ENCODE measurements at regions of chr7 and their contacts with region 1.

Region 1: GRCh38 chr7:69476416-69476815 is 121.9 kb upstream of the AUTS2 start:
- DNase-seq: no peak
- ATAC-seq: no peak
- H3K4me3 ChIP-seq: no peak overlapping the region
- H3K4me3 Mint-ChIP-seq: no peak overlapping the region
- H3K27ac ChIP-seq: no peak overlapping the region
- H3K27ac Mint-ChIP-seq: no peak overlapping the region
- H3K4me1 ChIP-seq: no peaks in the 10 kb centered on the region
- H3K4me1 Mint-ChIP-seq: no peaks in the 10 kb centered on the region
- H3K27me3 ChIP-seq: peaks cover 0 to 7% of the 10 kb centered on the region in 2 experiments
- H3K27me3 Mint-ChIP-seq: peaks cover 0 to 3% of the 10 kb centered on the region in 2 donors

Region 2: GRCh38 chr7:69217516-69218350 is 258.7 kb before region 1 on chr7:
- CTCF ChIA-PET with region 1: no interaction called
- POLR2A ChIA-PET with region 1: interaction called in 1 of 2 experiments, 11 read pairs
- DNase-seq: no peak
- ATAC-seq: no peak
- H3K4me3 ChIP-seq: no peak overlapping the region
- H3K4me3 Mint-ChIP-seq: no peak overlapping the region
- H3K27ac ChIP-seq: no peak overlapping the region
- H3K27ac Mint-ChIP-seq: no peak overlapping the region
- H3K4me1 ChIP-seq: no peaks in the 10 kb centered on the region
- H3K4me1 Mint-ChIP-seq: no peaks in the 10 kb centered on the region
- H3K27me3 ChIP-seq: no peaks in the 10 kb centered on the region
- H3K27me3 Mint-ChIP-seq: no peaks in the 10 kb centered on the region

Region 3: DNA sequence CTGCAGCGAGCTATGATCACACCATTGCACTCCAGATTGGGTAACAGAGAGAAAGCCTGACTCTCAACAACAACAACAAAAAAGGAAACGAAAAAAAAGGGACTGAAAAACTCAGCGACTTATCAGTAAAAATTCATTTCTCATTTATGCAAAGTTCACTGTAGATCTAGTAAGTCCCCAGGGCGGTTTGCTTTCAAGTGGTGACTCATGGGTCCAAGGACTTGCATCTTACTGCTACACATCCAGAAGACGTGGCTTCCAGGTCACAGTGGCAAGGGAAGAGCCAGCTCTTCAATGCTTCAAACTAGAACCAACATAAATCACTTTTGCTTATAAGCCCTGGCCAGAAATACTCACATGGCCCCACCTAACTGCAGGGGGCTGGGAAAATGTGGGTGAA is 56.5 kb before region 1 on chr7:
- CTCF ChIA-PET with region 1: no interaction called
- POLR2A ChIA-PET with region 1: no interaction called
- DNase-seq: no peak
- ATAC-seq: no peak
- H3K4me3 ChIP-seq: no peak overlapping the region
- H3K4me3 Mint-ChIP-seq: no peak overlapping the region
- H3K27ac ChIP-seq: no peak overlapping the region
- H3K27ac Mint-ChIP-seq: no peak overlapping the region
- H3K4me1 ChIP-seq: no peaks in the 10 kb centered on the region
- H3K4me1 Mint-ChIP-seq: no peaks in the 10 kb centered on the region
- H3K27me3 ChIP-seq: no peaks in the 10 kb centered on the region
- H3K27me3 Mint-ChIP-seq: no peaks in the 10 kb centered on the region

Region 4: DNA sequence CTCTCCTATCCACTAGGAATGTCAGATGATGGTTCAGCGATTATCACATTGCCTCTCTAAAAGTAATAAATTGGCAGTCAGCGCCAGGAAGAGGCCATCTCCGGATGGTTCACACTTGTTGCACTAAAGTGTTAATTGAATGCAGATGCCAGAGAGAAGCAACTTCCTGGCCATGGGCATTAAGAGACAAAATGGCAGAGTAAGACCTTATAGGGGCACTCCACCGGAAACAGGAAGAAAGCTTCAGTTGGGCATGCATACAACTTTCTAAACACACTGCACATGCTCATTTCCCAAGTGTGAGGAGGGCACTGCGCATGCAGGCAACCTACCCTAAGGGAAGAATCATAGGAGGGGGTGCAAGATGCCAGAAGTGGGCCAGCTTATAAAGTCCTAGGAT is 50.2 kb after region 1 on chr7:
- CTCF ChIA-PET with region 1: no interaction called
- POLR2A ChIA-PET with region 1: no interaction called
- DNase-seq: no peak
- ATAC-seq: no peak
- H3K4me3 ChIP-seq: no peak overlapping the region
- H3K4me3 Mint-ChIP-seq: no peak overlapping the region
- H3K27ac ChIP-seq: no peak overlapping the region
- H3K27ac Mint-ChIP-seq: no peak overlapping the region
- H3K4me1 ChIP-seq: no peaks in the 10 kb centered on the region
- H3K4me1 Mint-ChIP-seq: no peaks in the 10 kb centered on the region
- H3K27me3 ChIP-seq: peaks cover 0 to 7% of the 10 kb centered on the region in 2 experiments
- H3K27me3 Mint-ChIP-seq: peaks cover 0 to 5% of the 10 kb centered on the region in 2 donors

Measured in T-cell (primary cell).